ENCODE measurements at regions of chr13 and their contacts with region 1.

Region 1: GRCh38 chr13:28138012-28138755 is at the start of gene PAN3:
- DNase-seq: peak; percentile 94
- ATAC-seq: peak; percentile 55
- H3K4me3 Mint-ChIP-seq: peak within 1 kb of the TSS; percentile 95
- H3K27ac Mint-ChIP-seq: peak within 1 kb of the TSS; percentile 94
- H3K4me1 Mint-ChIP-seq: peaks cover 43% of the 10 kb centered on the region
- H3K27me3 Mint-ChIP-seq: no peaks in the 10 kb centered on the region
- total RNA-seq, gene PAN3: 26.6 to 27.3 TPM

Region 2: DNA sequence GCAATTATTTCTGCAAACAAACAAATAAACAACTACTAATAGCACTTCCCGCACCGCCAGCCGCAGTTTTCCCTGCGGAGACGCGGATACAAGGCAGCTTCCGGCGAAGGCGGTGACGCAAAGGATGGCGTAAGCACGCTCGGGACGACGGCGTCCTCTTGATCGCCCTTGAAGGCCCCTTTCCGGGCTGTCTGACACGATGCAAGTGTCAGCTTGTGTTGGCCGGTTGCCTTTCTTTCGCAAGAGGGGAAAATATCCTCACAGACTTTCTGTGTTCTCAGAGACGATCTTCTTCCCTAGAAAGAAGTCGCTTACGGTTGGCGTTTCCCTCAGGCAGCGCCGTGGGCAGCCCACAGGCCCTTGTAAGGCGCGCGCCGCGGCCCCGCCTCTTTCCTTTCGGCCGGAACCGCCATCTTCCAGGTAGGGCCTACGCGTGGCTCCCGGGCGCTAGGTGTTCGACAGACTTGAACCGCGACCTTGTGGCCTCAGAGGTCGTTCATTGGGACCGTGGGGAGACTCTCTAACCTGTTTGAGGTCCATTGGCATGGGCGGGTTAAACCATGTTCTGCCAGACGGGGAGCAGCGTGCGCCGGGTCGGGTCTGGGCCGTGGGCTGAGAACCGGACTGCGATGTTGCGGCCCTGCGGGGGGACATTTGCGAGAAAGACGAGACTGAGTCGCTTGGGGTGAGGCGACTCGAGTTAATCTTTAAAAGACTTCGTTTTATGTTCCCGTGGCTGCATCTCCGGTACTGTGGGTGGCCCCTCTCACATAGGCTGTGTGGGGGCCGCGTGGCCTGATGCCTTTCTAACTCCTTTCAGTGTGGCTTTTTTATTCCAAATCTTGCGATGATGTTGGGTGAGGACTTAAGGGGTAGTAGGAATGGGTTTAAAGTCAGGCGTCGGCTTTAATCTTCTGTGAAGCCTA is 886.8 kb before region 1 on chr13 and contains the start of gene RPL21:
- CTCF ChIA-PET with region 1: no interaction called
- POLR2A ChIA-PET with region 1: no interaction called
- intact Hi-C with region 1: loop called in 1 of 2 experiments (anchors 1 kb)
- DNase-seq: peak; percentile 94
- ATAC-seq: peak; percentile 94
- H3K4me3 Mint-ChIP-seq: peak within 1 kb of the TSS; percentile 97
- H3K27ac Mint-ChIP-seq: peak within 1 kb of the TSS; percentile 98
- H3K4me1 Mint-ChIP-seq: peaks cover 44% of the 10 kb centered on the region
- H3K27me3 Mint-ChIP-seq: no peaks in the 10 kb centered on the region
- total RNA-seq, gene RPL21: 756 to 1,682 TPM

Region 3: DNA sequence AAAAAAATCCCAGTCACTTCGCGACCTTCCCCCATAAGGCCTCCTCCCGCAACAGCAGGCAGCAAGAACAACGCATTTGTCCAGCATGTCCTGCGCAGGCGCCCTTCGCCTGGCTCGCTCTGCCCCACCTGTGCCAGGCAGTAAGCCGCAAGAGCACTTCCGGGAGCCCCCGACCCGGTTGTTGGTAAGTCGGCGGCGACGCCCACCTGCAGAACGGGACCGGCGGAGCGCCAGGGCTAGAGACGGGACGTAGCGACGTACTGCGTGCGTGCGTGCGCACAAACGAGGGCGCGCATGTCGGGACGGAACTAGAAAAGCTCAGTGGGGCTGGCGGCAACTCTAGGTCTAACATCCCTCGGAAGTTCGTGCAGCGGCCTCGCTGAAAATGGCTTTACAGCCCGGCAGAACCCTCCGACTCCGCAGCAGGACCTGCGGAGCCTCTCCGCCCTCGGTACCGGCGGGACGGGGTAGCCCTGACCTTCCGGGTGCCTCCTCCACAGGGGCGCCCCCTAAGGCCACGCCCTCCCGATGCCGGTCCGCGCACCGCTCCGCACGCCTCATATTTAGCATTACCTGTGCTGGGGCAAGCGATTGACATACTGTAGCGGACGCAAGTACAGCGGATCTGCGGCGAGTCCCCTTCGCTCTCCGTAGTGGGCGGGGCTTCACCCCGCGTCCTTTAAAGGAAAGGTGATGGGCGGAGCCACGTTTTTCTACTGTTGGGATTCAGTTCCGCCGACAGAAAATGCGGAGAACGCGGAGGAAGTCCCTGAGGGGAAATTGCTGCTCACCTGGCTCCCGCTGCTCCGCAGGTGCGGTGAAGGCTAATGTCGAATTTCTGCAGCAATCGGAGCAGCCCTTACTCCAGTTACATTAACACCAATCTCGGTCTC is 688.0 kb before region 1 on chr13 and contains the start of gene MTIF3:
- CTCF ChIA-PET with region 1: no interaction called
- POLR2A ChIA-PET with region 1: no interaction called
- intact Hi-C with region 1: loop called in 1 of 2 experiments (anchors 1 kb)
- DNase-seq: peak; percentile 98
- ATAC-seq: peak; percentile 86
- H3K4me3 Mint-ChIP-seq: peak within 1 kb of the TSS; percentile 89
- H3K27ac Mint-ChIP-seq: peak within 1 kb of the TSS; percentile 99
- H3K4me1 Mint-ChIP-seq: peaks cover 53% of the 10 kb centered on the region
- H3K27me3 Mint-ChIP-seq: no peaks in the 10 kb centered on the region
- total RNA-seq, gene MTIF3: 27.5 to 43.0 TPM

Region 4: GRCh38 chr13:28204690-28205443 is 66.7 kb after region 1 on chr13:
- CTCF ChIA-PET with region 1: no interaction called
- POLR2A ChIA-PET with region 1: no interaction called
- intact Hi-C with region 1: loop called (anchors 1 to 5 kb)
- DNase-seq: peak; percentile 81
- ATAC-seq: peak; percentile 95
- H3K4me3 Mint-ChIP-seq: no peak overlapping the region
- H3K27ac Mint-ChIP-seq: peak overlapping the region; percentile 59
- H3K4me1 Mint-ChIP-seq: peaks cover 37% of the 10 kb centered on the region
- H3K27me3 Mint-ChIP-seq: no peaks in the 10 kb centered on the region

Region 5: GRCh38 chr13:28324181-28324789 is 186.1 kb after region 1 on chr13:
- CTCF ChIA-PET with region 1: no interaction called
- POLR2A ChIA-PET with region 1: no interaction called
- intact Hi-C with region 1: no loop called
- DNase-seq: peak; percentile 74
- ATAC-seq: peak; percentile 78
- H3K4me3 Mint-ChIP-seq: no peak overlapping the region
- H3K27ac Mint-ChIP-seq: no peak overlapping the region
- H3K4me1 Mint-ChIP-seq: peaks cover 3% of the 10 kb centered on the region
- H3K27me3 Mint-ChIP-seq: no peaks in the 10 kb centered on the region

Region 6: DNA sequence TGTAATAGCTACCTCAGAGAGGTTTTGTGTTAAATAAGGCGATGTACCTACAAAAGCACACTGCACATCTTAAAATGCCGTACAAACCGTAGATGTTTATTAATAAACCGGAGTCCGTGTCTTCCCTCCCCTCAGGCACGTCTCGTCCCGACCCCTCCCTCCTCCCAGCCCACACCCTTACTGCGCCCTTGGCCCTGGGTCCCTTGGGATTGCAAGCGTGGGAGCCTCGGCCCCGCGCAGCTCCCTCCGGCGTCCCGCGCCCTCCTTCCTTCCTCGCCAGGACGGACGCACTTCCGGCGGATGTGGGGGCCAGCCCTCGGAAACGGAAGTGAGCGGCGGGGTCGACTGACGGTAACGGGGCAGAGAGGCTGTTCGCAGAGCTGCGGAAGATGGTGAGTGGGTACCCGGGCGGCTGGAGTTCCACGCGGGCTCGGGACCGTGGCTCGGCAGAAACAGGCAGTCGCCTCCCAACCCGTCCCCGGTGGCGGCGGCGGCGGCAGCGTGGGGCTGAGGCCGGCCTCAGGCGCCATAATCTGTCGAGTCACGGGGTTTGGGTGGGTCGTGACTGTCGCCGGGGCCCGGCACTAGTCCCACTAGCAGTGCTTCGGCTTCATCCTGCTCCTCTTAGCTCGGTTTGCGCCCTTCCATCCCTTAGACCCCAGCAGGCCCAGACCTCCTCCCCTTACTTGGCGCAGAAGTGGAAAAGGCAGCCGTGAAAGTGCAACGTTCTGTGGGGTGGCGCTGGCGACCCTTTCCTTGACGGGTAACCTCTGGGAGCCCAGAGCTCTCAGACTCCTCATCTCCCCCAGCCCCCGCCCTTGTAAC is 520.8 kb after region 1 on chr13 and contains the start of gene POMP:
- CTCF ChIA-PET with region 1: no interaction called
- POLR2A ChIA-PET with region 1: interaction called, 3 read pairs
- intact Hi-C with region 1: loop called (anchors 1 to 2 kb)
- DNase-seq: peak; percentile 95
- ATAC-seq: peak; percentile 88
- H3K4me3 Mint-ChIP-seq: peak within 1 kb of the TSS; percentile 99
- H3K27ac Mint-ChIP-seq: peak within 1 kb of the TSS; percentile 98
- H3K4me1 Mint-ChIP-seq: peaks cover 59% of the 10 kb centered on the region
- H3K27me3 Mint-ChIP-seq: no peaks in the 10 kb centered on the region
- total RNA-seq, gene POMP: 107 to 132 TPM

Region 7: DNA sequence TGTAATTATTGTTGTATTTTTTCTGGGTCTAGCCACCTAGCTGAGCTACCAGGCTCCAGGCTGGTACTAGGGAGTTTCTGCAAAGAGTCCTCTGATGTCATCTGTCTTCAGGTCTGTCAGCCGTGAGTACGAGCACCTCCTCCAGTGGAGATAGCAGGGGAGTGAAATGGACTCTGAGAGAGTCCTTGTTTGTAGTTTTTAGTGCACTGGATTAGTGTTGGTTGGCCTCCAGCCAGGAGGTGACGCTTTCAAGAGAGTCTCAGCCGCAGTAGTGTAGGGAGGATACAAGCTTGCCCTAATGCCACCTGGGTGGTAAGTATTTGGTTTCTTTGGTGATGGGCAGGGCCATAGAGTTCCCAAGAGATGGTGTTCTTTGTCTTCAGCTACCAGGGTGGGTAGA is 1072.5 kb after region 1 on chr13:
- CTCF ChIA-PET with region 1: no interaction called
- POLR2A ChIA-PET with region 1: no interaction called
- intact Hi-C with region 1: no loop called
- DNase-seq: no peak
- ATAC-seq: no peak
- H3K4me3 Mint-ChIP-seq: no peak overlapping the region
- H3K27ac Mint-ChIP-seq: no peak overlapping the region
- H3K4me1 Mint-ChIP-seq: no peaks in the 10 kb centered on the region
- H3K27me3 Mint-ChIP-seq: no peaks in the 10 kb centered on the region

Region 8: GRCh38 chr13:29595380-29596063 is 1457.3 kb after region 1 on chr13 and contains the start of gene SLC7A1:
- CTCF ChIA-PET with region 1: no interaction called
- POLR2A ChIA-PET with region 1: no interaction called
- intact Hi-C with region 1: loop called in 1 of 2 experiments (anchors 1 kb)
- DNase-seq: peak; percentile 92
- ATAC-seq: peak; percentile 88
- H3K4me3 Mint-ChIP-seq: peak within 1 kb of the TSS; percentile 90
- H3K27ac Mint-ChIP-seq: peak within 1 kb of the TSS; percentile 95
- H3K4me1 Mint-ChIP-seq: peaks cover 36% of the 10 kb centered on the region
- H3K27me3 Mint-ChIP-seq: no peaks in the 10 kb centered on the region
- total RNA-seq, gene SLC7A1: 91.1 to 126 TPM

Measured in activated CD4-positive, alpha-beta T cell treated with anti-CD3 and anti-CD28 coated beads for 36 hours (primary cell).